ENCODE measurements at regions of chr17 and their contacts with region 1.

Region 1: GRCh38 chr17:82230627-82231311 is 1.9 kb downstream of the SLC16A3 start:
- DNase-seq: peak; percentile 82 to 91
- H3K4me3 ChIP-seq: peak overlapping the region; percentile 47 to 53
- H3K27ac ChIP-seq: peak overlapping the region; percentile 83 to 88
- H3K4me1 ChIP-seq: peaks cover 0 to 9% of the 10 kb centered on the region in 2 donors
- H3K27me3 ChIP-seq: peaks cover 0 to 6% of the 10 kb centered on the region in 2 donors
- CTCF ChIP-seq: peak; percentile 30 to 79 (median 64)
- POLR2A ChIP-seq: peak in 1 of 2 donors; percentile 18

Region 2: DNA sequence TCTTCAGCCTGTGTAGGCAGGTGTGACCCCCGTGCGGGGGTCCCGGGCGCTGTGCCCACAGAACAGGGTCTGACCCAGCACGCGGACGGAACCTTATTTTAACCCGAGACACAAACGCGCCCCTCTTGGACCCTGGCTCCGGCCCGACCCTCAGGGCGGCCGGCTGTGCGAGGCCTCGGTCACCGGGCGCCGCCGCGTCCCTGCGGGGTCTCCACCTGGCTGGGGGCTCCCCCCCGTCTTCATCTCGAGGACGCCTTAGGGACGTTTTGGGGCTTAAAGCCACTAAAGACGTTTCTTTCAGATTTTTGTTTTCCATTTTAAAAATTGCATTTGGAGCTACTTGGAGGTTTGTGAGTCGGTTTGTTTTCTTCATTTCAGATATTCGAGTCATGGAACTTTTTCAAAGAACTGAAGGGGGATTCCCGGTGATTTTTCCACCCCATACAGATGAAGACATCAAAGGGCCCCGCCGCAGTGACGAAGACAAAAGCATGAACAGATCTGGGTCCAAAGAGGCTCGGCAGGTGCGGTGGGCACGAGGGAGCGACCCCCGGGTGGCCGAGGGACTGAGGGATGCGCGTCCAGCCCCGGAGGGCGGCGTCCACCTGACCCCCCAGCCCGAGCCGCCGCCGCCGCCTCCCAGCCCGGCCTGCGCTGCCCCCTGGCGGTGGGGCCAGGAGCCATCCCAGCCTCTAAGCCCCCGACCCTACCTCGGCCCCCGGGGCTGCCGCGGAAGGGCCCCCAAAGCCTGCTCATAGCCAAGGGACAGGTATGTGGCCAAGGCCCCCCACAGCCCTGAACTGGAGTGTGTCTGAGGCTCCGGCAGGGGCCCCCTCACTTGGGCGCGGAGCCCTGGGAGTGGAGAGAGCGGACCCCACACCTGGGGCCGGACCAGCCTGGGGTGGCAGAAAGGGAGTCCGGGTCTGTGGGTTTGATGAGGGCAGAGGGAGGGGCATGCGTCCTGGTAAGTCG is 90.5 kb after region 1 on chr17:
- intact Hi-C with region 1: loop called (anchors 10 kb)
- DNase-seq: peak in 1 of 2 donors; percentile 45
- H3K4me3 ChIP-seq: no peak overlapping the region
- H3K27ac ChIP-seq: no peak overlapping the region
- H3K4me1 ChIP-seq: no peaks in the 10 kb centered on the region
- H3K27me3 ChIP-seq: no peaks in the 10 kb centered on the region
- CTCF ChIP-seq: peak; percentile 74 to 96 (median 96)
- POLR2A ChIP-seq: peak in 1 of 2 donors; percentile 28

Region 3: DNA sequence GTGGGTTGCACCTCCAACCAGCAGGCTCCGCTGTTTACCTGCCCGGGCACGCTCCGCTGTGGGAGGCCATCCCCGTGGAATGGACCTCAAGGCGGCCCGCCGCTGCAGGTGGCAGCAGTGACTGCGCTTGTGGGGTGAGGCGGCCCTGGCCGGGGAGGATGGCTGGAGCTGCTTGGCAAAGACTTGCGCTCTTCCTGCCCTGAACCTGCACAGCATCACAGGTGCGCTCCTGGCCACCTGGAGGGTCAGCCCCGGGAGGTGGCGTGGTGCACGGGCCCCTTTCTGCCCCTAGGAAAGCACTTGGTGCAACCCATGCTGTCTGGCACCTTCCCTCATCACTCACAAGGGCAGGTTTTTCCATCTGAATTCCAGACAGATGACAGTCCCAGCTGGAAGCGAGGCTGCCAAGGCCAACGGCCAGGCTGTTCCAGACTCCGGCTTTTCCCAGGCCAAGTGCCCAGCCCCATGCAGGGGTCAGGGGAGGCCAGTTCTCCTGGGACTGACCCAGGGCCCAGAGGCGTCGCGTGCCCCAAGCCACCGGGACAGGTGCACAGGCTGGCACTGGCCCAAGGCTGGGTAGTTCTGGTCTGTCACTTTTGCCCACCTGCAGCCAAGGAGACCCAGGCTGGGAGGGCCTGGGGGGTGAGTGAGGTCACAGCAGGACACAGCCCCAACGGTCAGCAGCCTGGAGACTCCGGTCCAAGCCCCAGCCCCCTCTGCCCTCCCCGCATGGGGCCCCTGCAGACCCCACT is 154.1 kb after region 1 on chr17:
- intact Hi-C with region 1: no loop called
- DNase-seq: no peak
- H3K4me3 ChIP-seq: no peak overlapping the region
- H3K27ac ChIP-seq: no peak overlapping the region
- H3K4me1 ChIP-seq: peaks cover 0 to 5% of the 10 kb centered on the region in 2 donors
- H3K27me3 ChIP-seq: no peaks in the 10 kb centered on the region
- CTCF ChIP-seq: no peak
- POLR2A ChIP-seq: no peak